ENCODE measurements at regions of chr2 and their contacts with region 1.

Region 1: GRCh38 chr2:43131024-43131889 is 95.1 kb downstream of the ZFP36L2 start:
- DNase-seq: peak; percentile 99
- H3K4me3 Mint-ChIP-seq: peak overlapping the region; percentile 19
- H3K27ac Mint-ChIP-seq: peak overlapping the region; percentile 89
- H3K4me1 Mint-ChIP-seq: peaks cover 42% of the 10 kb centered on the region
- H3K27me3 Mint-ChIP-seq: no peaks in the 10 kb centered on the region
- CTCF ChIP-seq: peak; percentile 63

Region 2: GRCh38 chr2:42438685-42439084 is 692.6 kb before region 1 on chr2:
- CTCF ChIA-PET with region 1: no interaction called
- POLR2A ChIA-PET with region 1: no interaction called
- intact Hi-C with region 1: no loop called
- DNase-seq: no peak
- H3K4me3 Mint-ChIP-seq: no peak overlapping the region
- H3K27ac Mint-ChIP-seq: no peak overlapping the region
- H3K4me1 Mint-ChIP-seq: no peaks in the 10 kb centered on the region
- H3K27me3 Mint-ChIP-seq: peaks cover 14% of the 10 kb centered on the region
- CTCF ChIP-seq: no peak

Region 3: DNA sequence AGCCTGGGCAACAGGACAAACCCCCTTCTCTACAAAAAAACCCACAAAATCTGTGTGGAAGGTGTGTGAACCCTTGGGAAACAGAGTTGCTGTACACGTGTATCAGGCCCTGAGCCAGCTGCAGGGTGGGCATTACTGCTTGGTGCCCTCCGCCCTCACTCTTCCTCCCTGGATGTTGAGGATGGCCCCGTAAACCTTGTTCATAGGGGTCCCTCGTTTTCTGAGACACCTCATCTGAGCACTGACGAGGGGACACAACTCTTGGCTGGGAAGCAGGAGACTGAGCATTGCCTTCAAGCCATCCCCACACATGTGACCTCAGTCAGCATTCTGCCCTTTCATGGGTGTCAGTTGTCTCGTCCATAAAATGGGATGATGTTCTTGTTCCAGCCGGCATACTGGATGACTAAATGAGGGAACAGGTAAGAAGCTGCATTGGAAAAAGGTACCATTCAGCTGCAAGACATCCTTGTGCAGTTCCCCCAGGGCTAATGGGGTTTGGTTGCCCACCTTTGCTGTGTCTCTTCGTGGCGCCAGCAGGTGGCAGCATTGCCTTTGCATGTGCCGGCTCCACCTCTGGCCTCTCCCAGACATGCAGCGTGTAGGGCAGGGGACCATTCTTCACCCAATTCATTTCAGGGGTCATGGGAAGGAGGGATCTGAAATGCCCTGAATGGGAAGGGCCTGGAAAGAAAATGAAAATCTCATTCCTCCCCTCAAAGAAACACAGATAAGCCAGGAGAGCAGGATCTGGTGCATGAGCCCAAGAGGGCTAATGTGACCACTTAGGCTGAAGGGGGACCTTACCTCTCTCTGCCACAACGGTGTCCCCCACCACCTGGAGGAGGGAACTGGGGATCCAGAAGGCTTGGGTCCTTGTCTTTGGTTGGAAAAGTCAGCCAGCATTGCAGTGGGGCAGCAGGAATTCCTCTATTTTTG is 302.5 kb before region 1 on chr2:
- CTCF ChIA-PET with region 1: interaction called, 3 read pairs
- POLR2A ChIA-PET with region 1: no interaction called
- intact Hi-C with region 1: loop called (anchors 1 kb)
- DNase-seq: peak; percentile 77
- H3K4me3 Mint-ChIP-seq: no peak overlapping the region
- H3K27ac Mint-ChIP-seq: peak overlapping the region; percentile 19
- H3K4me1 Mint-ChIP-seq: peaks cover 26% of the 10 kb centered on the region
- H3K27me3 Mint-ChIP-seq: no peaks in the 10 kb centered on the region
- CTCF ChIP-seq: peak; percentile 90

Region 4: DNA sequence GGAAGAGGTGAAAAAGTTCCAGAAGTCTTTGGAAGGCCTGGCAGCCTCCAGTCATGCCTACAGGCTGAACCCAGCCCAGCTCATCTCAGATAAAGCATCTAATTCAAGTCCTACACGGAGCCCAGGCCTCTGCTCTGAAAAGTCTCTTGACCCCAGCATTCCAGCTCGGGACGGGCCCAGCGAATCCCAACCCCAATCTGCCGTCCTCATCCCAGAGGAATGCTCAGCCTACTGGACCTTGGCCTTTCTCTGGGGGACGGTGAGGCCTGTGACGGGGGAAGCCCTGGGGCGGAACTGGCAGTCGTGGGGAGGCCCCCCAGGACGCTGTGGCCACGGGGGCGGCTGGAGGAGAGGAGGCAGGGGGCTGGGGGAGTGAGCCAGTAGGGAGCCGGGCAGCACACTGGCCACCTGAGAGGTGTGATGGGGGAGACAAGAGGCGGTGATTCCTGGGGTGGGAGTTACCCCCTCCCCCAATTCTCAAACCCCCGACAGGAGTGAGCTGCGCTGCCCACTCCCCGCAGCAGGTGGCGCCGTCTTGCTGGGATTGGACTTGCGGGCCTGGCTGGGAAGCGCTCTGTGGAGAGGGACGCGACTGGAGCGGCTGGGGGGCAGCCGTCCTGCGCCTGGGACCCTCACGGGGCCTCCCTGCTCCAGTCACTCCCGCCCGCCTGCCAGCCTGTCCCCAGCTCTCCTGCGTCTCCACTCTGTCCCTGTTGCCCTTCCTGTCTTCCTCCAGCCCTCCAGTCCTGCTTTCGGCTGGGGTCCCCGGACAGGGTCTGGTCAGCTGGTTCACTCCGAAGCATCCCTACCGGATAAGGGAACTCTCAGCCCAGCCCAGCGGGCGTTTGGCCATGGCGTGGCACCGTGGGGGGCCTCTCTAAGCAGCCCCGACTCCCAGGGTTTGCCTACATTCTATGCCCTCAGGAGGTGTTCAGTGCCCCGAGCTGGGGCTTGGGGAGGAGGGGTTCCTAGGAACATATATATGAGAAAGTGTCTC is 156.2 kb before region 1 on chr2:
- CTCF ChIA-PET with region 1: interaction called, 15 read pairs
- POLR2A ChIA-PET with region 1: interaction called, 3 read pairs
- intact Hi-C with region 1: loop called (anchors 1 kb)
- DNase-seq: peak; percentile 64
- H3K4me3 Mint-ChIP-seq: no peak overlapping the region
- H3K27ac Mint-ChIP-seq: peak overlapping the region; percentile 52
- H3K4me1 Mint-ChIP-seq: peaks cover 38% of the 10 kb centered on the region
- H3K27me3 Mint-ChIP-seq: no peaks in the 10 kb centered on the region
- CTCF ChIP-seq: peak; percentile 95

Region 5: DNA sequence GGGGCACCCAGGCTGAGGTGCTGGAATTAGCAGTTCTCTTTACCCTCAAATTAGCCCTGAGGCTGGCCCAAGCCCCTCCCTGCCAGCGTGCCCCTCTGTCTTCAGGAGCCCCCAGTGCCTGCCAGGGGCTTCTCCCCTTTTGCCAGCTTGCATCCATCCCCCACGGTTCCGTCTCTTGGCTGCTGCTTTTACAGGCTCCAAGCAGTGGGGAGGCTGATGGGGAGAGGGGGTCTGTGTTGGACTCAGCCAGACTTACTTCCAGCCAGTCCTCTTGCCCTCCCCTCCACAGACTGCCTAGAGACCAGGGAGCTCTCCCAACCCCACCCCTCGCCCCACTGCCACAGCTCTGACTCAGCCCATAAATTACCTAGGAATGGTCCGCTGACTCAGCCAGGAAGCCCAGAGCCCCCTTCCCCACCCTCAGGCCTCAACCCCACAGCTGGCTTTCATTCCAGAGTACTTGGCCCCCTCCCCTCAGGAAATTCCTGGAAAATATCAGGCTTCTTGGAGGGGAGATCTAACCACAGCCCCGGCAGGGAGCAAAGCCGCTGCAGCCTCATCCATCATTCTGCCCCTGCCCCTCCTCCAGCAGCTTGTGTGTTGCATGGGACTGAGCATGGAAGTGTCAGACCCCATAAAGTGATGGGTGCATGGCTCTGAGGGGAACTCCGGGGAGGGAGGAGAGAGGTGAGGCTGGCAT is 89.4 kb before region 1 on chr2:
- CTCF ChIA-PET with region 1: interaction called, 6 read pairs
- POLR2A ChIA-PET with region 1: interaction called, 10 read pairs
- intact Hi-C with region 1: loop called (anchors 1 kb)
- DNase-seq: peak; percentile 93
- H3K4me3 Mint-ChIP-seq: peak overlapping the region; percentile 50
- H3K27ac Mint-ChIP-seq: peak overlapping the region; percentile 92
- H3K4me1 Mint-ChIP-seq: peaks cover 44% of the 10 kb centered on the region
- H3K27me3 Mint-ChIP-seq: no peaks in the 10 kb centered on the region
- CTCF ChIP-seq: no peak

Region 6: DNA sequence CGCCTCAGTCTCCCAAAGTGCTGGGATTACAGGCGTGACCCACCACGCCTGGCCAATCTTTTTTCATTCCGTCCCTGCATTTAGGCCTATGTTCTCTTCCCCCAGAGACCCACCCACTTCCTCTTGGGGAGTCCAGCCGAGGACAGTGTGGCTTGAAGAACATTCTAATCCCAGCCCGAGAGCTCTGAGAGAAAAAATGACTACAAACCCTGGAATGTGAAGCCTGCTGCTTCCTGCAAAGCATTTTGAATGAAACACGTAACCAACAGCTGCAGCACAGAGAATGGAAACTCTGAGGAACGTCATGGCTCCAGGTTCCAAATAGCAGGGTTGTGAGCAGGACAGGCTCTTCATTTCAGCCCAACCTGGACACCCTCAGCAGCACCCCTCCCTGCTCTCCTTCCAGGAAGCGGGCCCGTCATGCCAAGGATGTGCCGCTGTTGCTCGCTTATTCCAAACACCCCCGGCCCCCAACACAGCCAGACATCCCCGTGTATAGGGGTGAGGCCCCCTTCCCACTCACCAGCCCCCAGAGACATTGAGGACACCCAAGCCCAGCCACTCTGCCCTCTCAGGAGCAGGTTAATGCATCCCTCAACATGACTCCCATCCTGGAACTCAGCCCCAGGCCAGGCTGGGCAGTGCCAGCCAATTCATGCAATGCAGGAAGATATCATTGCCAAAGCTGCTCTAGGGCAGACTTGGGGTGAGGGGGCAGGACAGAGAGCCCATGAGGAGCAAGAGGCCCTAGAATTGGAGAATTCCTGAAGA is 44.6 kb before region 1 on chr2:
- CTCF ChIA-PET with region 1: interaction called, 7 read pairs
- POLR2A ChIA-PET with region 1: interaction called, 22 read pairs
- intact Hi-C with region 1: loop called (anchors 1 kb)
- DNase-seq: peak; percentile 98
- H3K4me3 Mint-ChIP-seq: peak overlapping the region; percentile 48
- H3K27ac Mint-ChIP-seq: peak overlapping the region; percentile 94
- H3K4me1 Mint-ChIP-seq: peaks cover 60% of the 10 kb centered on the region
- H3K27me3 Mint-ChIP-seq: no peaks in the 10 kb centered on the region
- CTCF ChIP-seq: no peak

Region 7: GRCh38 chr2:43219383-43220228 is 88.3 kb after region 1 on chr2:
- CTCF ChIA-PET with region 1: interaction called, 4 read pairs
- POLR2A ChIA-PET with region 1: interaction called, 240 read pairs
- intact Hi-C with region 1: loop called (anchors 1 kb)
- DNase-seq: peak; percentile 88
- H3K4me3 Mint-ChIP-seq: peak overlapping the region; percentile 93
- H3K27ac Mint-ChIP-seq: peak overlapping the region; percentile 83
- H3K4me1 Mint-ChIP-seq: peaks cover 22% of the 10 kb centered on the region
- H3K27me3 Mint-ChIP-seq: no peaks in the 10 kb centered on the region
- CTCF ChIP-seq: no peak

Region 8: DNA sequence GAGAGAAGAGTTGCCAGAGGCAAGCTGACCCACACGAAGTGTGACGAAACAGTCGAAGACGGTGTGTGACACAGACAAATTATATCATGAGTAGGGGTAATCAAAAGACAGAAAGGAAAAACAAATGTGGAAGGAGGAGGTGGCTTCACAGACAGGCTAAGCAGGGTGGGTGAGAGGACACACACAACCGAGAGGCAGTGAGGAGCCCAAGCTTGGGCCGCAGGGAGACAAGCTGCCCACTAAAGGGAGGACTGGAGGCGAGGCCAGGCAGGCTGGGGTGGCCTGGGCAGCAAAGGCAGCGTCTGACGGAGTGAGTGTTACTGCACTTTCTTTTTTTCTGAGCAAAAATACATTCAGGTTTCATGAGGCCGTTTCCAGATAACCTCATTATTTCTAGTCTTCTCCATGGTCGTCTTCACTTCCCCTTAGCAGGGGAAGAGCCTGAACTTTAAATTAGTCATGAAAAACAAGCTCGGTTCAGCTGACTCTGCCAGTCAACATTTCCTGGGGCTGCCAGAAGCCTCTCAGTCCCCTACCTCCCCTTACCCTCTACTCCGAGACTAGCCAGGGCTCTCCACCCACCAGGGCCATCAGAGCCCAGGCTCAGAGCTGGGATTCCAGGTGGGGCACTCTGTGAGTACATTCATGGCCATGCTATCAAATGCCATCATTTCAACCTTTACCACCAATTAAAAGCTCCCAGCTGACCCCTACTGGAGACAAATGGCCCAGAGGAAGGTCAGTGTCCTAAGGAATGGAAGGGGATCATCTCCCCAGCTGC is 108.9 kb after region 1 on chr2:
- CTCF ChIA-PET with region 1: no interaction called
- POLR2A ChIA-PET with region 1: no interaction called
- intact Hi-C with region 1: no loop called
- DNase-seq: peak; percentile 14
- H3K4me3 Mint-ChIP-seq: no peak overlapping the region
- H3K27ac Mint-ChIP-seq: peak overlapping the region; percentile 3
- H3K4me1 Mint-ChIP-seq: peaks cover 9% of the 10 kb centered on the region
- H3K27me3 Mint-ChIP-seq: no peaks in the 10 kb centered on the region
- CTCF ChIP-seq: no peak

Region 9: DNA sequence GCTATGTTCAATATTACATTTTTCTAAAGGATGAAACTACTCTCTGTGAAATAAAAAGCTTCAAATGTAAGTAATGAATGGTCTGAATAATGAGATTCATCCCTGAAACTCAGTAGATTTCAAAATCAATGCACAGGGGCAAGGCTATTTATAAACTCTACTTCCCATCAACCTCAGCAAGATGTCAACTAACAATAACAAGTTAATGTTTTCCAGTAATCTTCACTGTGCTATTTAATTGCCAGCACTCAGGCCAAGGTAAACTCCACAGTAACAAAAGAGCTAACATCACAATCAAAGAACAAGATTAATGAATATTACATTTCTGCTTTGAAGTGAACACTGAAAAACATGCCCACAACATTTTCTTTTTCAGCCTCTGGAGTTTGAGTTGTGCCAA is 239.4 kb after region 1 on chr2:
- CTCF ChIA-PET with region 1: no interaction called
- POLR2A ChIA-PET with region 1: no interaction called
- intact Hi-C with region 1: no loop called
- DNase-seq: peak; percentile 3
- H3K4me3 Mint-ChIP-seq: no peak overlapping the region
- H3K27ac Mint-ChIP-seq: no peak overlapping the region
- H3K4me1 Mint-ChIP-seq: no peaks in the 10 kb centered on the region
- H3K27me3 Mint-ChIP-seq: no peaks in the 10 kb centered on the region
- CTCF ChIP-seq: no peak